ENCODE measurements at regions of chr7 and their contacts with region 1.

Region 1: DNA sequence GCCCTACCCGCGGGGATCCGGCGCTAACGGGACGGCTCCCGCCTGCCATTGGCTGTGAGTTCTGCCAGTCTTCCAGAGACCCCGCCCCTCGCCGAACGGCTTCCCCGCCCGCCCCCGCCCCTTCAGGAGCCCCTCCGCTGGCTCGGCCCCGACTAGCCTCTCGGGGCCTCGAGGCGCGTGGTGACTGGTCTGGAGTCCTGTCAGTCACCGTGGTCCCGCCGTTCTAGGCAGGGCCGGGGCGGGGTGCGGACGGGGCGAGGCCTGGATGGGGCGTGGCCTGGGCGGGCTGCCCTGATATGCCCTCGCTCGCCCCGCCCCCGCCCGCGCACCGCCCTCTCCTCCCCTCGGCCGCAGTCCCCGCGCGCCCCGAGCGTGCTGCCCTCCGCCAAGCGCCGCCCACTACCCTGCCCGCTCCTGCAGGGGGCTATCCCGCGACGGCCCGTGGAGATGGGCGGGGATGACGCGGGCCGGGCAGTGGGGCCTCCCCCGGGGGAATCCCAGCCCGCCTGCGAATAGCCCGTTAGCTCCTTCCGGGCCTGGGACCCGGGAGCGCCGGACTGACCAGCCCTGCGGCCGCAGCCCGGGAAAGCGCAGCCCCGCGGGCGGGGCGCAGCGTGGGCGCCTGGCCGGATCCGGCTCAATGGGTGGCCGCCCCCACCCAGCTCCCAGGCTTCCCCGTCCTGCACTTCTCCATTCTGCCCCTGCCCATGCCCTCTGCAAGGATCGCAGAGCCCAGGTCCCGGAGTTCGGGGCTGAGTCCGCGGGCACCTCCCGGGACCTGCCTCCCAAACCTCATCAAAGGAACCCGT is 450 bp upstream of the HIP1 start:
- DNase-seq: peak; percentile 99 to 100 (median 100)
- ATAC-seq: peak; percentile 91
- H3K4me3 ChIP-seq: peak overlapping the region; percentile 82
- H3K4me3 Mint-ChIP-seq: peak overlapping the region; percentile 100
- H3K27ac ChIP-seq: peak overlapping the region; percentile 77
- H3K27ac Mint-ChIP-seq: peak overlapping the region; percentile 89
- H3K4me1 ChIP-seq: peaks cover 21% of the 10 kb centered on the region
- H3K4me1 Mint-ChIP-seq: peaks cover 16% of the 10 kb centered on the region
- H3K27me3 ChIP-seq: no peaks in the 10 kb centered on the region
- H3K27me3 Mint-ChIP-seq: peaks cover 4% of the 10 kb centered on the region
- CTCF ChIP-seq: no peak

Region 2: DNA sequence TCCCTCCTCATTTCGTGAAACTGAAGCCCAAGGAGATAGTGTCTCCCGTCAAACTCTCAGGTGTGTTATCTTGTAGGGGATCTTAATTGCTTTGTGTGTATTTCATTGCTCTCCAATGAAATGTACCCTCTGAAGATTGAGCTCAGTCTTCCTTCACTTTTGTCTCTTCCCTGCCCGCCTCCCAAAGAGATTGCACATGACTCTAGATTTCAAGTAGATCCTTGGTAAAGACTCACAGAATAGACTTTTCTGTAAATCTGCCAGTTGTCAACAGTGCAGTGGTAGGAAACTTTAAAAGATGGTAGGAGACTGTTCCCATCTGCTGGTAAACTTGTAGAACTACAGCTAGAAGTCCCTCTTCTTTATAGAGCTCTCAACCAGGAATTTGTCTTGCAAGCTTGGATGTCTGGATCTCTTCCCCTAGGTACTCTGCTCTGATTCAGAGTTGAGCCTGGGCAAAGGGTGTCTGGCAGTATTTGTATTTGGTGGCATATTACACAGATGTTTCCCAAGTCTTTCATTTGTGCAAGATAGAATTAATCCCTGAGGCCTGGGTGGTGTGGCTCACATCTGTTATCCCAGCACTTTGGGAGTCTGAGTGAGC is 23.2 kb after region 1 on chr7:
- CTCF ChIA-PET with region 1: interaction called, 13 read pairs
- POLR2A ChIA-PET with region 1: interaction called, 7 read pairs
- intact Hi-C with region 1: no loop called
- DNase-seq: peak in 4 of 14 experiments; percentile 1 to 64 (median 61)
- ATAC-seq: peak; percentile 94
- H3K4me3 ChIP-seq: no peak overlapping the region
- H3K4me3 Mint-ChIP-seq: no peak overlapping the region
- H3K27ac ChIP-seq: no peak overlapping the region
- H3K27ac Mint-ChIP-seq: no peak overlapping the region
- H3K4me1 ChIP-seq: no peaks in the 10 kb centered on the region
- H3K4me1 Mint-ChIP-seq: peaks cover 3% of the 10 kb centered on the region
- H3K27me3 ChIP-seq: no peaks in the 10 kb centered on the region
- H3K27me3 Mint-ChIP-seq: no peaks in the 10 kb centered on the region
- CTCF ChIP-seq: peak; percentile 72

Region 3: DNA sequence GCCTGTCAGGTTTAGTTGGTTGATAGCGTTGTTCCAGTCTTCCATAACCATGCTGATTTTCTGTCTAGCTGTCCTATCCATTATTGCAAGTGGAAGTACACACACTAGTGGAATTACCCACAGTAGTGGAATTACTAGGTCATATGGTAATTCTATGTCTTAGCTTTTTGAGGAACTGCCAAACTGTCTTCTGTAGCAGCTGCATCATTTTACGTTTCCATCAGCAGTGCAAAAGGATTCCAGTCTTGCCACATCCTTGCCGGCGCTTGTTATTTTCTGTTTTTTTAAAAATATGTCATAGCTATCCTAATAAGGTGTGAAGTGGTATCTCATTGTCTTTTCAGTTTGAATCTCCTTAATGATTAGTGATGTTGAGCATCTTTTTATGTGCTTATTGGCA is 122.4 kb after region 1 on chr7:
- CTCF ChIA-PET with region 1: no interaction called
- POLR2A ChIA-PET with region 1: no interaction called
- intact Hi-C with region 1: no loop called
- DNase-seq: peak in 2 of 14 experiments; percentile 51 to 63
- ATAC-seq: no peak
- H3K4me3 ChIP-seq: no peak overlapping the region
- H3K4me3 Mint-ChIP-seq: no peak overlapping the region
- H3K27ac ChIP-seq: no peak overlapping the region
- H3K27ac Mint-ChIP-seq: no peak overlapping the region
- H3K4me1 ChIP-seq: peaks cover 5% of the 10 kb centered on the region
- H3K4me1 Mint-ChIP-seq: no peaks in the 10 kb centered on the region
- H3K27me3 ChIP-seq: no peaks in the 10 kb centered on the region
- H3K27me3 Mint-ChIP-seq: peaks cover 7% of the 10 kb centered on the region
- CTCF ChIP-seq: no peak

Region 4: DNA sequence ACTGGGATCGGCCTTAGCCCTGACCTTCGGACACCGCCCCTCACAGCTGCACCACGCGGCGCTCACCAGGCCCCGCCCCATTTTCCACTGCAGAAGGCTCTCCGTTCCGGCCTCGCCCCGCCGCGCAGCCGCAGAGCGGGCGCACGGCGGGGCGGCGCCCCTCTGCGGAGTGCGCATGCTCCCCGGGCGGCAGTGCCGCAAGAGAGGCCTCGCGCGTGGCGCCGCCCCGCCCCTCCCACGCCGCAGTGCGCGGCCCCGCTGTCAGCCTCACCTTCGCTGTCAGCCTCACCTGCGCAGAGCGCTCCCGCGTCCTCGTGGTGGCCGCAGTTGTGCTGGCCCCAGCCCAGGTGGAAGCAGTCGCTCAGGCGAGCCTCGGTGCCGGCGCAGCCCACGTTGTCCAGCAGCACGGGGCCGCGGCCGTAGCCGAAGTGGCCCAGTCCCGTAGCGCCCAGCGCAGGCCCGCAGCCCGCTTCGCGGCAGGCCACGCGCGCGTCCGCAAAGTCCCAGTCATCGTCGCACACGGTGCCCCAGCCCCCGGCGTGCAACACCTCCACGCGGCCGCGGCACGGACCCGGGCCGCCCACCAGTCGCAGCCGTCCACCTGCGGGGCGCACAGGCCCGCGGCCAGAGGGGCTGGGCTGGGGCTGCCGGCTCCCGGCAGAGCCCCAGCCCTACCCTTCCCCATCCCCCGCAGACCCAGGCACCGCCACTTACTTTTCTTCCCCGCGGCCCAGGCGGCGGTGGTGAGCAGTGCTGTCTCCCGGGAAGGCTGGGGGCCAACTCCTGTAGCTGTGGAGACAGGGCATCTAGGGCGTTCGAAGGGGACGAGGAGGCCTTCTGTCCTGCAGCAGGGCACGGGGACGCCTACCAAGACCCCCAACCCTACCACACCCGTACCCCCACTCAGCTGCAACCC is 654.2 kb after region 1 on chr7:
- CTCF ChIA-PET with region 1: no interaction called
- POLR2A ChIA-PET with region 1: no interaction called
- intact Hi-C with region 1: loop called in 1 of 2 experiments (anchors 5 kb)
- DNase-seq: peak; percentile 81 to 97 (median 90)
- ATAC-seq: peak; percentile 81
- H3K4me3 ChIP-seq: peak overlapping the region; percentile 60
- H3K4me3 Mint-ChIP-seq: peak overlapping the region; percentile 88
- H3K27ac ChIP-seq: peak overlapping the region; percentile 42 to 46
- H3K27ac Mint-ChIP-seq: peak overlapping the region; percentile 88
- H3K4me1 ChIP-seq: peaks cover 33% of the 10 kb centered on the region
- H3K4me1 Mint-ChIP-seq: peaks cover 22% of the 10 kb centered on the region
- H3K27me3 ChIP-seq: no peaks in the 10 kb centered on the region
- H3K27me3 Mint-ChIP-seq: no peaks in the 10 kb centered on the region
- CTCF ChIP-seq: no peak

Measured in CD4-positive, alpha-beta T cell (primary cell).